ENCODE measurements at regions of chr17 and their contacts with region 1.

Region 1: DNA sequence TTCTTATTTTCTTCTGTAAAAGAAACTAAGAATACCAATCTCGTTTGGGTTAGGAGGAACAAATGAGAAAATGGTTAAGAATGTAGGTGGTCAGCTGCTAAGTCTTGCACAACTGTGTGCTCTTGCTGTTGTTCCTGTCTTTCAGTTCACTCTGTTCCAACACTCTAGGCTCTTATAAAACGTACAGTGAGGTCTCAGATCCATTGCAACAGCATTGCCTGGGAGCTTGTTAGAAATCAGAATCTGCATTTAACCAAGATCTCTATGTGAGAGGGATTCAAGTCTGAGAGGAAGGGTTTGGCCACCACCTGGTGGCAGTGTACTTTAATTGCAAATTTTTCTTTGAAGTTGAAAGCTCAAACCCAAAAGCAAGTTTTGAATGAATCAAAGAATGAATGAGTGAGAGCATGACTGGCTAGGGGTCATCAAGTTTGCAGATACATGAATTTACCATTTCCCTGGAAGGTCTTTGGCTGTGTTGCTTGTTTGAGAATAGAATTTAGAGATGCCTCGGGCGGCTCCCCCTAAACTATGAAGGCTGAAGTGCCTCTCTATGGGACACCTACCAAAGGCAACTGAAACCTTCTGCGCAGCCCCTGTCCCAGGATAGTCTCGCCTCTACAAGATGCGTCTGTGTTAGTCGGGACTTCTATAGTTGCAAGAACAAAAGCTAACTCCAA is 2.5 kb downstream of the ALOX15B start:
- DNase-seq: peak in 6 of 9 experiments; percentile 24 to 67 (median 36)
- ATAC-seq: peak; percentile 59
- H3K4me3 ChIP-seq: no peak overlapping the region
- H3K4me3 Mint-ChIP-seq: no peak overlapping the region
- H3K27ac ChIP-seq: no peak overlapping the region
- H3K27ac Mint-ChIP-seq: no peak overlapping the region
- H3K4me1 ChIP-seq: peaks cover 4% of the 10 kb centered on the region
- H3K4me1 Mint-ChIP-seq: peaks cover 2% of the 10 kb centered on the region
- H3K27me3 ChIP-seq: peaks cover 0 to 8% of the 10 kb centered on the region in 2 experiments
- H3K27me3 Mint-ChIP-seq: peaks cover 22% of the 10 kb centered on the region
- CTCF ChIP-seq: peak; percentile 59

Region 2: DNA sequence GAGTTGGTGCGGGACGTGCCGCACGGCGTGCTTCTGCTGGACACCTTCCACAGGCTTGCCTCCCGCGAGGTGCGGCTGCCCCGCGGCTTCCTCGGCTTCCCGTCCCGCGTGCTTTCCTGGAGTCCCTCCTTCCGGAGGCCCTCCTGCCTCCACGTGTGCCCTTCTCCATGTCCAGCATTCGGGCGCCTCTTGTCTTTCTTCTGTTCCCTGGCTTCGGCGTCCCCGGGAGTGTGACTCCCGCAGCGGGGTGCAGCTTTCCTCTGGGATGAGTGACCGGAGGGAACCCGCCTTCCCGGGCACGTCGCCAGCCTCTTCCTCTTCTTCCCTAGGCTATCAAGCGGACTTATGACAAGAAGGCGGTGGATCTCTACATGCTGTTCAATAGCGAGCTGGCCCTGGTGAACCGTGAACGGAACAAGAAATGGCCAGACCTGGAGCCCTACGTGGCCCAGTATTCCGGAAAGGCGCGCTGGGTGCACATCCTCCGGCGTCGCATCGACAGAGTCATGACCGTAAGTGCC is 300.8 kb before region 1 on chr17:
- CTCF ChIA-PET with region 1: interaction called, 15 read pairs
- POLR2A ChIA-PET with region 1: no interaction called
- intact Hi-C with region 1: loop called in 1 of 2 experiments (anchors 1 kb)
- DNase-seq: no peak
- ATAC-seq: no peak
- H3K4me3 ChIP-seq: no peak overlapping the region
- H3K4me3 Mint-ChIP-seq: no peak overlapping the region
- H3K27ac ChIP-seq: no peak overlapping the region
- H3K27ac Mint-ChIP-seq: no peak overlapping the region
- H3K4me1 ChIP-seq: no peaks in the 10 kb centered on the region
- H3K4me1 Mint-ChIP-seq: no peaks in the 10 kb centered on the region
- H3K27me3 ChIP-seq: peaks cover 0 to 6% of the 10 kb centered on the region in 2 experiments
- H3K27me3 Mint-ChIP-seq: peaks cover 28% of the 10 kb centered on the region
- CTCF ChIP-seq: no peak

Region 3: DNA sequence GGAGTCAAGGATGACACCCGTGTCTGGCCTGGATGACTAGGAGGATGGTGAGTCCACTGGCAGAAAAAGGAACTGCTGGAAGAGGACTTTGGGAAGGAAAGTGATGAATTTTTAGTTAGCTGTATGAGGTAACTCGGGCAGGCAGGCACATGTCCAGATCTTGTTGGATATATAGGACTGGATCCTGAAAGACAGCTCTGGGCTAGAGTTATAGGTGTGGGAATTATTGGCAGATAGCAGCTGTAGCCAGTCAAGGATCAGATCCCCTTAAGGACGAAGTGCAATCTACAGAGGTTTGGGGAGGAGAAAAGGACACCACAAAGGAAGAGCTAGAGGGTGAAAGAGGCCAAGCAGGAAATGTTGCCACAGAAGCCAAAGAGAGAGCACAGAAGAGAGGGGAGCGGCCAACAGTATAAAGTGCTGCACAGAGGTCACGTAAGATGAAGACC is 173.5 kb before region 1 on chr17:
- CTCF ChIA-PET with region 1: interaction called, 12 read pairs
- POLR2A ChIA-PET with region 1: no interaction called
- intact Hi-C with region 1: no loop called
- DNase-seq: peak in 1 of 9 experiments; percentile 53
- ATAC-seq: peak; percentile 67
- H3K4me3 ChIP-seq: peak overlapping the region; percentile 21 to 22
- H3K4me3 Mint-ChIP-seq: peak overlapping the region; percentile 50
- H3K27ac ChIP-seq: peak overlapping the region in 1 of 2 experiments; percentile 65
- H3K27ac Mint-ChIP-seq: peak overlapping the region; percentile 80
- H3K4me1 ChIP-seq: peaks cover 26% of the 10 kb centered on the region
- H3K4me1 Mint-ChIP-seq: peaks cover 31% of the 10 kb centered on the region
- H3K27me3 ChIP-seq: no peaks in the 10 kb centered on the region
- H3K27me3 Mint-ChIP-seq: no peaks in the 10 kb centered on the region
- CTCF ChIP-seq: no peak

Region 4: GRCh38 chr17:7977039-7977438 is 64.3 kb before region 1 on chr17:
- CTCF ChIA-PET with region 1: no interaction called
- POLR2A ChIA-PET with region 1: no interaction called
- intact Hi-C with region 1: no loop called
- DNase-seq: no peak
- ATAC-seq: no peak
- H3K4me3 ChIP-seq: no peak overlapping the region
- H3K4me3 Mint-ChIP-seq: no peak overlapping the region
- H3K27ac ChIP-seq: no peak overlapping the region
- H3K27ac Mint-ChIP-seq: no peak overlapping the region
- H3K4me1 ChIP-seq: no peaks in the 10 kb centered on the region
- H3K4me1 Mint-ChIP-seq: no peaks in the 10 kb centered on the region
- H3K27me3 ChIP-seq: no peaks in the 10 kb centered on the region
- H3K27me3 Mint-ChIP-seq: peaks cover 6% of the 10 kb centered on the region
- CTCF ChIP-seq: no peak

Region 5: GRCh38 chr17:8031261-8031661 is 10.1 kb before region 1 on chr17:
- CTCF ChIA-PET with region 1: interaction called, 13 read pairs
- POLR2A ChIA-PET with region 1: no interaction called
- intact Hi-C with region 1: no loop called
- DNase-seq: no peak
- ATAC-seq: no peak
- H3K4me3 ChIP-seq: no peak overlapping the region
- H3K4me3 Mint-ChIP-seq: no peak overlapping the region
- H3K27ac ChIP-seq: no peak overlapping the region
- H3K27ac Mint-ChIP-seq: no peak overlapping the region
- H3K4me1 ChIP-seq: no peaks in the 10 kb centered on the region
- H3K4me1 Mint-ChIP-seq: no peaks in the 10 kb centered on the region
- H3K27me3 ChIP-seq: peaks cover 0 to 3% of the 10 kb centered on the region in 2 experiments
- H3K27me3 Mint-ChIP-seq: peaks cover 45% of the 10 kb centered on the region
- CTCF ChIP-seq: no peak

Region 6: GRCh38 chr17:8067806-8068205 is 26.4 kb after region 1 on chr17:
- CTCF ChIA-PET with region 1: no interaction called
- POLR2A ChIA-PET with region 1: no interaction called
- intact Hi-C with region 1: no loop called
- DNase-seq: no peak
- ATAC-seq: no peak
- H3K4me3 ChIP-seq: no peak overlapping the region
- H3K4me3 Mint-ChIP-seq: no peak overlapping the region
- H3K27ac ChIP-seq: no peak overlapping the region
- H3K27ac Mint-ChIP-seq: no peak overlapping the region
- H3K4me1 ChIP-seq: peaks cover 8% of the 10 kb centered on the region
- H3K4me1 Mint-ChIP-seq: peaks cover 4% of the 10 kb centered on the region
- H3K27me3 ChIP-seq: peaks cover 0 to 7% of the 10 kb centered on the region in 2 experiments
- H3K27me3 Mint-ChIP-seq: peaks cover 30% of the 10 kb centered on the region
- CTCF ChIP-seq: no peak